ENCODE measurements at regions of chr2 and their contacts with region 1.

Region 1: GRCh38 chr2:196660244-196660643 is 20.7 kb downstream of the CCDC150 start:
- DNase-seq: no peak
- CTCF ChIP-seq: no peak

Region 2: DNA sequence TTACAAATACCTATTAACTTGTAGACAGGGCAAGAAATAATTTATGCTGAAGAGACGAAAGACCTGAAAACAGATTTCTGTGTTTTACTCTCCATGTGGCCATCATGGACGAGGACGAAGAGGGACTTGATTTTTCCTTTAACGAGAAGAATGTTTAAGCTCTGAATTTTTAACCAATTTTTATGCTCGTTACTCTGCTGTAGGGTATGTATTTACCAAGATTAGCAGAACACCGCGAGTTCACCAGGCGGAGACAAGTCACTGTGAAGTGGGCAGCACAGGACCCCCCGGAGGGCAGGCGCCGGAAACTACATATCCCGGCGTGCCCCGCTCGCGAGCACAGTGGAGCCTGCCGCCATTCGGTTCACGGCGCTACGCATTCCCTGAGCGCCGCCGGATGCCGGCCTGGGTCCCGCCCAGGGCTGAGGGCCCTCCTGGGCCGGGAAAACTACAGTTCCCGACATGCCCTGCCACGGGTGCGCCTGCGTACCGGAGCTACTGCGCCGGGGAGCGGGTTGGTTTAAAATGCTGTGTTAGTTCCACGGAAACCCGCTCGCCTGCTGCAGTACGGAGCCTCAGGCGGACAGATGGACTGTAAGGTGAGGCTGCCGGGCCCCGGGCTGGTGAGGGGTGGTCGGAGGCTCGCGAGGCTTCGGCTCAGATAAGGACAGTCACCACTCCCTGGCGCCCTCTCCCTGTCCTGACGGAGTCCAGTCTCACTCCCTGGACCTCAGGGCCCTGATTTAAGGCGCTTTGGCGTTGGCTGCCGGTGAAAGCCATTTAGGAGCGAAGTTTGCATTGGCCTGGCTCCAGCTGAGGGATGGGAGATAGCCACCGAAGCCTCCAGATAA is 20.8 kb before region 1 on chr2 and contains the start of gene CCDC150:
- CTCF ChIA-PET with region 1: interaction called, 13 read pairs
- POLR2A ChIA-PET with region 1: no interaction called
- DNase-seq: peak; percentile 98
- CTCF ChIP-seq: no peak

Measured in GM10248 (cell line).